Left cardiac atrium (tissue), 4 donors: ENCODE measurements at regions of chr11 and their contacts with region 1.

Region 1: DNA sequence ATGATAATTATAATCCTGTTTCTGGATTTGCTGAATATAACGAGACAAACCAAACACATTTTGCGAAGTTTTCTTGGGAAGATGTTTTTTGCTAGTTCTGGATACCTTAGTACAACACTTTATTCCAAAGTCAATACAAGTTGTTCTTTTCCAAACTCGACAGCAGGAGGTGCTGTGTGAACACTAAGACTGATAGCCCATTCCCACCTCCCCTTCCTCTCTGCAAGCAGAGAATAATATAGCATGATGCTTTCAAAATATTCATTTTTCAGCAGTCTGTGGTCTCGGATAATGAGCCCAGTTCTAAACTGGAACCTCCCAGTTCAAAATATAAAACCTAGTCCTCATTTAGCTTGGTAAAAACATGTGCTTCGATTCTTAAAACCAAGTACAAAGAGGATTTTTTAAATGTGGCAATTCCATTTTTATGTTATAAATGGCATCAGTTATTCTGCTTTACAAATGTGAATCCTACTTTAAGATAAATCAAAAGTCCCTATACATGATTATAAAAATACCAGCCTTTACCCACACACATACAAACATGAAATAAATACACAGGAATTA is 129.1 kb downstream of the DCDC1 start:
- DNase-seq: no peak
- ATAC-seq: peak in 1 of 2 donors; percentile 32

Region 2: GRCh38 chr11:31214372-31214771 is 26.0 kb before region 1 on chr11:
- intact Hi-C with region 1: no loop called
- DNase-seq: no peak
- ATAC-seq: no peak

Region 3: GRCh38 chr11:31303644-31304180 is 63.3 kb after region 1 on chr11:
- intact Hi-C with region 1: no loop called
- DNase-seq: no peak
- ATAC-seq: no peak

Region 4: DNA sequence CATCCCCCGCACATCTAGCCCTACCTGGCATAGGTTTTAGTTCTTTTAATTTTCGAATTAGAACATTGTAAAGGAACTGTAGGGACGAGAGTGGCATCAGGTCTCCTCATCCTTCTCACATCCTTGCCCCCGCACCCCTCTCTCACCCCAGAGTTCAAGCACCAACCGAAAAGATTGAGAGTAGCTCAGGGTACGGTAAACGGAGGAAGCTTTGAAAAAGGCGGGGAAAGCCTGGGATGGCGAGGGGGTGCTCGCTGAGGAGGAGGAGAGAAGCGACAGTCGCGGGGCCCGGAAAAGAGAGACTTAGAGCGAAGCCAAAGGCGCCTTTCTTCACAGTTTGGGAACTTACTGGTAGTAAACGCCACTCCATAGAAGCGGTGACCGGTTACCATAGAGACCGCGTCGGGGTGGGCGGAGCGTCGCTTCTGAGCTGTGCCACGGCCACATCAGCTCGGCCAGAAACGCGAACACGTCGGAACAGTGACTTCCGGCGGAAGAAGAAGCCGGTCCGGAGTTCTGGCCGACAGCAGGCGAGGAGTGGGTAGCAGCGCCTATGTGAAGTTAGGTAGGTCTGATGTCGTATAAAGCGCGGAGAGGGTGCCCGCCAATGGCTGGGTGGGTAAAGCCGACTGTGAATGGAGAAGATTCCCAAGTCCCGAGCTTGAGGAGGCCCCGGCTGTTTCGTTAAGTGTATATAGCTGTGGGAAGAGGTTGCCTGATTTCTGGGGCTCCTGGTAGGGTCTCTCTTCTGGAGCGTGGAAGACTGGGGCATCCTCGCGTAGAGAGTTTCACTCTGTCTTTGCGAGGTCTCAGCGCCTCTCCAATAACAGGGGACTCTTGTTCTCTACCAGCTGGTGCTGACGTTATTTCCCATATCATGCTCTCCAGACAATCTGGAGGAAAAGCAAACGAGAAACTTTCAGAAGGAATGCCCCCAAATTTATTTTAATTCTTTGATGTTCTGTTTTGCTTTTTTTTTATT is 129.2 kb after region 1 on chr11 and contains the starts of genes DCDC1 and DNAJC24:
- intact Hi-C with region 1: loop called in 1 of 2 experiments (anchors 10 kb)
- DNase-seq: peak; percentile 94
- ATAC-seq: peak; percentile 100
- total RNA-seq, gene DCDC1: 0.13 to 0.15 TPM
- total RNA-seq, gene DNAJC24: 13.2 to 14.4 TPM

Region 5: DNA sequence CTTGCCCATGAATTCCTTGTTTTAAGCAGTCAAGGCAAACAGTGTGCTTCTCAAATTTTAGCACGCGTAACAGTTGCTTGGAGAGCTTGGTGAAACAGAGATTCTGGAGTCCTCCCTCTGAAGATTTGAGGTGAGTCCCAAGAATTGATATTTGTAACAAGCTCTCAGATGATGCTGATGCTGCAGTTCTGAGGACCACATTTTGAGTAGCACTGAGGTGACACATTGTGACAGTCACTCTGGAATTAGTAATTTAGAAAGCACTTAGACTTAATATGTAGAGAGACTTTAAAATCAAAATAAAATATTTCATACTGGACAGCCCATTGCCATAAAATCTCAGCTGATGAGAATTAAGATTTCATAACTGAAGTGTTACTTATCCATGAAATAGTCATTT is 167.8 kb after region 1 on chr11:
- intact Hi-C with region 1: no loop called
- DNase-seq: no peak
- ATAC-seq: no peak